IMR-90 (cell line): ENCODE measurements at regions of chr4 and their contacts with region 1.

Region 1: GRCh38 chr4:182925298-182925738 is 8.1 kb upstream of the DCTD start:
- DNase-seq: peak; percentile 84
- ATAC-seq: peak; percentile 32
- H3K4me3 ChIP-seq: no peak overlapping the region
- H3K27ac ChIP-seq: no peak overlapping the region
- H3K4me1 ChIP-seq: peaks cover 17% of the 10 kb centered on the region
- H3K27me3 ChIP-seq: no peaks in the 10 kb centered on the region
- CTCF ChIP-seq: peak; percentile 67
- POLR2A ChIP-seq: no peak
- RAD21 ChIP-seq: peak; percentile 67

Region 2: DNA sequence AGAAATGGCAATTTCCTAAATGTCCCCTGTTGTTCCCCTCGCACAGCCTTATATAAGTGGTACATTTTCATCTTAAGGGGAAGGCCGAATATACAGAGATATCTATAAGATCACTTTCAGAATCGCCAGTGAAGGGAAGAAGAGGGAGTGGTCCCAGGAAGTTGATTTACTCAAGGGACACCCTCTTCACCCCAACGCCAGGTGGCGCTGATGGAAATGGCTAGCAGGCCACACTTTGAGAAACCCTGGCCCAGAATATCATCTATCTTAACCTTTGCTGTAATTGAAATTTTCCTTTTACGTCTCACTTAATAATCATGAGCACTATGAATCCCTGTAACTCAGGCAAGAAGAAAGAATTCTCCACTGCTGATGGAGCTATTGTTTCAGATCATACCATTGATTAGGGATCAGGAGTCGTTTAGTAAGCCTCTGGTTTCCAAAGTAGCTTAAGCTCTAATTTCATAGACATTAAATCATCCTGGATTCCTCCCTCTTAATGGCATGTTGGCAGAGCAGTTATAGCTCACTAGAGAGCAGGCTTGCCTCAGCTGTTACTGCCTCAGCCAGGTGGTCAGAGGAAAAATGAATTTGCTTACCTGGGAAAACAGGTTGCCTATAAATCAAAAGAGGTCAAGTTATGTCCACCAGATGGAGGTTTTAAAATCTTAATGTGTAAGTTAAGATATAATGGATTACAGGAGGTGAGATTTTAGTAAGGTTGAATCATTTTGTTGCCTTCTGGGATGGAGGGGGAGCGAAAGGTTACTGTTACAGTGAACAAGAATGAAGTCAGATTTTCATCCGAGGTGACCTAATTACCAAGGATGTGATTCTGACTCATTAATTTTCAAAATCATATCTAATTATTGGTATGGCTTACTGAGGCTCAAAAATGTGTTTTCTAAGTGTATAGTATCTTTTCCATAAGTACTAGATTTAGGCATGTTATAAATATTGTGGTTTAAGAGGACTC is 1623.3 kb before region 1 on chr4:
- CTCF ChIA-PET with region 1: no interaction called
- POLR2A ChIA-PET with region 1: no interaction called
- dilution Hi-C with region 1: no loop called
- in situ Hi-C with region 1: no loop called
- intact Hi-C with region 1: loop called (anchors 5 kb)
- DNase-seq: peak; percentile 43
- ATAC-seq: peak; percentile 64; the same call in 1 of the 2 replicates
- H3K4me3 ChIP-seq: no peak overlapping the region
- H3K27ac ChIP-seq: no peak overlapping the region
- H3K4me1 ChIP-seq: no peaks in the 10 kb centered on the region
- H3K27me3 ChIP-seq: no peaks in the 10 kb centered on the region
- CTCF ChIP-seq: peak; percentile 61
- POLR2A ChIP-seq: no peak
- RAD21 ChIP-seq: peak; percentile 60

Region 3: GRCh38 chr4:181685911-181686310 is 1239.4 kb before region 1 on chr4:
- CTCF ChIA-PET with region 1: interaction called, 3 read pairs
- POLR2A ChIA-PET with region 1: no interaction called
- dilution Hi-C with region 1: no loop called
- in situ Hi-C with region 1: no loop called
- intact Hi-C with region 1: loop called (anchors 10 kb)
- DNase-seq: peak; percentile 97
- ATAC-seq: peak; percentile 85
- H3K4me3 ChIP-seq: peak overlapping the region; percentile 8; the same call in 1 of the 2 replicates
- H3K27ac ChIP-seq: no peak overlapping the region
- H3K4me1 ChIP-seq: peaks cover 11% of the 10 kb centered on the region
- H3K27me3 ChIP-seq: no peaks in the 10 kb centered on the region
- CTCF ChIP-seq: no peak
- POLR2A ChIP-seq: peak; percentile 33; the same call in 1 of the 2 replicates
- RAD21 ChIP-seq: no peak

Region 4: GRCh38 chr4:182240161-182241130 is 684.9 kb before region 1 on chr4:
- CTCF ChIA-PET with region 1: no interaction called
- POLR2A ChIA-PET with region 1: no interaction called
- dilution Hi-C with region 1: no loop called
- in situ Hi-C with region 1: no loop called
- intact Hi-C with region 1: loop called (anchors 10 kb)
- DNase-seq: peak; percentile 89
- ATAC-seq: peak; percentile 73
- H3K4me3 ChIP-seq: no peak overlapping the region; the same call in 1 of the 2 replicates
- H3K27ac ChIP-seq: peak overlapping the region; percentile 69
- H3K4me1 ChIP-seq: peaks cover 19% of the 10 kb centered on the region
- H3K27me3 ChIP-seq: no peaks in the 10 kb centered on the region
- CTCF ChIP-seq: no peak
- POLR2A ChIP-seq: peak; percentile 20; the same call in 1 of the 2 replicates
- RAD21 ChIP-seq: no peak; the same call in 1 of the 2 replicates

Region 5: DNA sequence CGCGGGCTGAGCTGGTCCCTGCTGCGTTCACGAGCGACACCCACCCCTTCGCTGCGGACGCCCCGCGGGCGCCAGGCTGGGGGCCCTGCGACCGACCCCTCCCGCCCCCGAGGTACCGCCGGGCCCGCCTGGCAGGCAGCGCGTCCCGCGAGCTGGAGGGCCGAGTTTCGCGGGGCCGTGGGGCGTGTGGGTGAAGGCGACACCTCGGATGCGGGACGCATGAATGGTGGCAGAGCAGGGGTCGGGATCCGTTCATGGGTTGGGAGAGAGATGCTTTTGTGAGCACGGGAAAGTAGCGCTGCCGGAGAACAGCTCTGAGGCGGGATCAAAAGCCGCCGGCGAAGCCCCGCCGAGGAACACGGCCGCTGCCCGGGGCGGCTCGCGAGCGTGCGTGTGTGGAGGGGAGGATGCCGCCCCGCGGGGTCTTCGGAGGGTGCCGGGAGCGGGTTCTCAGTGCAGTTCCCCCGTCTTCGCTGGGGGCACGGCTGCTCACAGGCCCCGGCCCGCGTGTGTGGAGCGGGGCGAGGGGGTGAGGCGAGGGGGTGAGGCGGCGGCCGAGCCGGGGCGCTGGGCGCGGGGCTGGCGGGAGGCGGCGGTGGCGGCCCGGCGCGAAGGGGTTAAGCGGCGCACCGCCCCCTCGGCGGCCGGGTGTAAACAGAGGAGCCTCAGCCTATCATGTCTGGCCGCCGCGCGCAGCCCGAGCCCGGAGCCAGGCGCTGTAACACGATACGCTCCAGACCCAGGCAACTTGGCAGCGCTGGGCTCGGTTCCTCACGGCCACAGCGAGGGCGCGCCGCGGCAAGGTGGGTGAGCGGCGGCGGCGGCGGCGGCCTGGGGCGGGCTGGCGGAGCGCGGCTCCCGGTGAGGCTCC is 476.8 kb before region 1 on chr4:
- CTCF ChIA-PET with region 1: no interaction called
- POLR2A ChIA-PET with region 1: no interaction called
- dilution Hi-C with region 1: no loop called
- in situ Hi-C with region 1: no loop called
- intact Hi-C with region 1: loop called (anchors 10 kb)
- DNase-seq: peak; percentile 93
- ATAC-seq: peak; percentile 98
- H3K4me3 ChIP-seq: peak overlapping the region; percentile 62
- H3K27ac ChIP-seq: peak overlapping the region; percentile 50
- H3K4me1 ChIP-seq: no peaks in the 10 kb centered on the region
- H3K27me3 ChIP-seq: no peaks in the 10 kb centered on the region
- CTCF ChIP-seq: no peak
- POLR2A ChIP-seq: peak; percentile 61; the same call in 1 of the 2 replicates
- RAD21 ChIP-seq: 0 out of 2 replicates have a peak, but pooled peaks have one; percentile 13

Region 6: DNA sequence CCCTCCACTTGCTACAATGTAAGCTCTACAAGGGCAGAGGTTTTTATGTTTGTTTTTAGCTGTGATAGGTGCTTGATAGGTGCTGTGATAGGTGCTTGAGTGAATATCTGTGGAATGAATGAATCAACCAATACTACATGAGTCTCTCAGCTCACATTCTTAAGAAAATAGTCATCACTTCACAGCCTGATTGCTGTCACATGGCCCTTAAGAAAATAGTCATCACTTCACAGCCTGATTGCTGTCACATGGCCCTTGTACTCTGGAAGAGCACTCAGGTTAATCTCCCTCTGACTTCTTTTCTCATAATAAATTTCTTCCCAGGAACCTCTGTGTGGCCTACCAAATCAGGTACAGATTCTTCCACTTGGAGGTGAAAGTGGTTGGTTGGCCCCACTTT is 346.9 kb before region 1 on chr4:
- CTCF ChIA-PET with region 1: no interaction called
- POLR2A ChIA-PET with region 1: no interaction called
- dilution Hi-C with region 1: no loop called
- in situ Hi-C with region 1: no loop called
- intact Hi-C with region 1: no loop called
- DNase-seq: peak; percentile 91
- ATAC-seq: peak; percentile 57
- H3K4me3 ChIP-seq: no peak overlapping the region
- H3K27ac ChIP-seq: no peak overlapping the region
- H3K4me1 ChIP-seq: peaks cover 5% of the 10 kb centered on the region; the same call in 1 of the 2 replicates
- H3K27me3 ChIP-seq: no peaks in the 10 kb centered on the region
- CTCF ChIP-seq: no peak
- POLR2A ChIP-seq: no peak
- RAD21 ChIP-seq: no peak